HAP-1 (cell line): ENCODE measurements at regions of chr16 and their contacts with region 1.

Region 1: GRCh38 chr16:56988948-56989945 is at the start of gene NLRC5:
- DNase-seq: peak; percentile 55 to 79
- H3K4me3 ChIP-seq: peak within 1 kb of the TSS; percentile 57
- H3K4me1 ChIP-seq: peaks cover 16% of the 10 kb centered on the region
- H3K27me3 ChIP-seq: no peaks in the 10 kb centered on the region

Region 2: DNA sequence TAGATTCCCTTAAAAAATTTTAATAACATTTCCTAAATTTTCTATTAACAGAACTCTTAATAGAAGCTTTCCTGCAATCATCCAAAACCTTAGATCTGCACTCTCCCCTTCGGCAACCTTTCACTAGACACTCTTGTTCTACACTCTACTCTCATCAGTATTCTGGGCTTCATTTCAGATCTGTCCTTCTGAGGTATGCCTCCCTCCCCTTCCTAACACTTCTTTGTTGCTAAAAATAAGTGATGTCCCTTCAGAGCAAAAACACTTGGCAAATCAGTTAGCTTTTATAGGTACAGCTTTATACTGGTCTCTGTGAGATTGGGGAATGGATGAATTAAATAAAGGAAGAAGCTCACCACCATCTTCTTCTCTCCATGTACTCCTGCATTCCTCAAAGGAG is 826.2 kb before region 1 on chr16:
- in situ Hi-C with region 1: no loop called
- DNase-seq: no peak
- H3K4me3 ChIP-seq: no peak overlapping the region
- H3K4me1 ChIP-seq: no peaks in the 10 kb centered on the region
- H3K27me3 ChIP-seq: no peaks in the 10 kb centered on the region

Region 3: DNA sequence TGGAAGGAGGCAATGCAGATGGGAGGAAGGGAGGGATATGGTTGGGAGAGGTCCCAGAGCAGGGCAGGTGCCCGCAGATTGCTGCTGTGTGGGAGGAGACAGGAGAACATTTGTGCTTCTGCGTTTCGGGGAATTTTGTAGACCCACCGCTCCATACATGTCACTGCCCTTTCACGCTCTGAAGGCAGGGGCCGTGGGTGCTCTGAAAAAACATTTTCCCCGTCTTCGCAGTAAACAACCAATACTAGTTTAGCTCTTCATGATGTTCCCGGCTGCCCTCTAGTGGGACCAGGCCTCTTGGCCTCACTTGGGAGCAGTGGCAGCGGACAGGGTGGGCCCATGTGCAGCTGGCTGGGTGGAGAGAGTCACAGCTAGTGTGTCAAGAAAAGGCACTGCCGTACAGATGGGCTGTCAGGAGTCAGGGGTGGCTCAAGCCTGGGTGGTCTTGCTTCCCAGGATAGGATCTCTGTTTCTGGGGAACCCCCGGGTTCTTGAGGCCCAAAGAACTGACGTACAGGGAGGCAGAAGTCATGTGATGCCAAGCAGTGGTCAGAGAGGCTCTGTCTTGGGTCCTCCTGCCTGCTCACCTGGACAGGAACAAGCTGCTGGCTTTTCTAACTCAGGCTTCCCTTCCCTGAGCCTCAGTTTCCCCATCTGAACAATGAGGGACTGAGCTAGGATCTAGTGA is 56.6 kb after region 1 on chr16:
- in situ Hi-C with region 1: loop called (anchors 10 kb)
- DNase-seq: peak in 1 of 2 experiments; percentile 42
- H3K4me3 ChIP-seq: no peak overlapping the region
- H3K4me1 ChIP-seq: no peaks in the 10 kb centered on the region
- H3K27me3 ChIP-seq: no peaks in the 10 kb centered on the region